A549 (cell line): ENCODE measurements at regions of chr2 and their contacts with region 1.

Region 1: DNA sequence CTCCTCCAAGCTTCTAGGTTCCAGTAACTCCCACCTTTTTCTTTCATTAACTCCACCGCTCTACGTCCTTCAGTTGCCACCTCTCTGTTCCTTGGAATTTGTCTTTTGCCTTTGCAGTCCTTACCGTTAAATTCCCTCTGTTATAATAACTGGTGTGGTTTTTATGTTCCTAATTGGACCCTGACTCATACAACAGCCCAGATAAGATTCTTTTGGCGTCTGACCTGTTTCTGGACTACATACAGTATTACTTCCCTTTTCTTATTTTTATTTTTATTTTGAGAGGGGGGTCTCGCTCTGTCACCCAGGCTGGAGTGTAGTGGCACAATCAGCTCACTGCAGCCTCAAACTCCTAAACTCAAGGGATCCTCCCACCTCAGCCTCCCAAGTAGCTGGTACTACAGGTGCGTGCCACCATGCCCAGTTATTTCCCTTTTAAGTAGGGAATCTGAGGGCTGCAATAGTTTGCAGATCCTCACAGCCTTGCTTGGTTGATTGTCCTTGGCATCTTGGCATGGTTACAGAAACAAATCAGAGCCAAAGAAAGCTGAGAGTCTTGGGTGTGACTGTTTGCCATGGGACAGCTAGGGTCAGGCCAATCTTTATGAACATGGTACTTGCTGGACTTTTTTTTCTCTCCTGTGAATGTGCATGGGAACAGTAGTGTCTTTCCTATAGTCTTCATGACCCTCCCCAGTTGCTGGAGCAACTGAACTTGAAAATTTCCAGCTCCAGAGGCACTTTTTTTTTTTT is 22.0 kb downstream of the TCF23 start:
- DNase-seq: no peak
- ATAC-seq: no peak
- H3K4me3 ChIP-seq: no peak overlapping the region
- H3K27ac ChIP-seq: no peak overlapping the region
- H3K4me1 ChIP-seq: no peaks in the 10 kb centered on the region
- CTCF ChIP-seq: no peak
- EP300 ChIP-seq: no peak
- POLR2A ChIP-seq: no peak
- RAD21 ChIP-seq: no peak

Region 2: DNA sequence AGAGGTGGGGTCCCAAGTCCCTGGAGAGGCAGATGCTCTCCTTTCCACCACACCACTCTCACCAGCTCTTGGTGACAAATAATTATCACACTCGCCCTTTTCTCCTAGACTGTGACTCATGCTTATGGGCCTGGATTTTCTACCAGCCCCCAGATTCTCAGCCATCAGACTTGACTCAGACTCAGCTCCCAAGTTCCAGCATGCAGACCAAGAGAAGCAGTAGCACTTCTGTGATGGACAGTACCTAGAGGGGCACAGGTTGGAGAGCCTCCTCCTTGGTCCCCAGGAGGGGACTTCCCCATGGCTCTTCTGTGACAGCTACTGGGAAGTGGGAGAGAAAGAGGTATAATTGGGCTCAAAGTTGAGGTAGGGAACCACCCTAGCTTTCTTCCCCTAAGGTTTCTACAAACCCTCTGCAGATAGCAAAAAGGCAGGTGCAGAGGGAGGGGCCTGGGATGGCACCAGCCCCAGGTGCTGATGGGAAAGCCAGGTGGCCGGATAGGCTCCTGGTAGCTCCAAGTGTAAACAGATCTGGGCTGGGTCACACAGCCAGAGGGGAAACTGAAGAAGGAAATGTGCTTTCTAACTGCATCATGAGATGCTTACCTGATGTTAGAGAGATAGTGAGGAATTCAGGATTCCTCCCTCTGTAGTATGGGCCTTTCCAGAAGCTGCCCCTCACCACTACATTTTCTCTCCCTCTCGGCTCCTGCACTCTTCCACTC is 17.8 kb before region 1 on chr2:
- CTCF ChIA-PET with region 1: interaction called, 36 read pairs
- POLR2A ChIA-PET with region 1: no interaction called
- DNase-seq: no peak
- ATAC-seq: peak in 1 of 2 experiments; percentile 13; a peak in 2 of 6 replicates
- H3K4me3 ChIP-seq: no peak overlapping the region
- H3K27ac ChIP-seq: no peak overlapping the region
- H3K4me1 ChIP-seq: 0 out of 3 replicates have a peak, but pooled peaks cover 8% of the 10 kb centered on the region
- CTCF ChIP-seq: no peak
- EP300 ChIP-seq: no peak
- POLR2A ChIP-seq: no peak
- RAD21 ChIP-seq: no peak

Region 3: DNA sequence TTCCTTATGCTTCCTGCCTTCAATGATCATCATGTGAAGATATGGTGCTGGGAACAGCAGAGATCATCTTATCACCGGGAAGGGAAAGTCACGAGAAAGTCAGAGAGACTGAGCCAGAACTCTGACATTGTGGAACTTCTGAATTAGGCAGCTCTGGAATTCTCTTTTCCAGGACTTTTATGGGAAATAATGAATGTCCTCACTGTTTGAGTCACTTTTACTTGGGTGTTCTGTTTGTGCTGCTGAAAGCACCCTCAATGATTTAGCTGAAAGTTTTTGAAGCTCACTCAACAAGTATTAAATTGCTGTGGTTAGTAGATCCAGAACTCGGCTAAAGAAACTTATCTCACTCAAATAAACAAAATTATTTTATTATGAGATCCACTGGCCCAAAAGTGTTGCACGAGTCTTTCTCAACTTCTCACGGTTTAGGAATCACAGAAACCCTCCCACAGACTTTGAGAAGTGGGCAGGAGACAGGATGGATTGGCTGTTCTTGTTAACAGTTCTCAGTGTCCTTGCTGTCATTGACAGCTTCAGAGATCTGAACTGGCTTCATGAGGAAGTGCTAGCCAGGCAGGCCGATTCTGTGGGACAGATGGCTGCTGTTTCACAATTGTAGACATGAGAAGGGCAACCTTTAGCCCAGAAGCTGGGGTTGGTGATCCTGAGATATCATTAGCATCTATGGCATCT is 14.7 kb after region 1 on chr2:
- CTCF ChIA-PET with region 1: interaction called, 34 read pairs
- POLR2A ChIA-PET with region 1: no interaction called
- DNase-seq: no peak
- ATAC-seq: peak in 1 of 2 experiments; percentile 51; a peak in 3 of 6 replicates
- H3K4me3 ChIP-seq: no peak overlapping the region
- H3K27ac ChIP-seq: no peak overlapping the region
- H3K4me1 ChIP-seq: no peaks in the 10 kb centered on the region
- CTCF ChIP-seq: no peak
- EP300 ChIP-seq: no peak
- POLR2A ChIP-seq: no peak
- RAD21 ChIP-seq: no peak

Region 4: DNA sequence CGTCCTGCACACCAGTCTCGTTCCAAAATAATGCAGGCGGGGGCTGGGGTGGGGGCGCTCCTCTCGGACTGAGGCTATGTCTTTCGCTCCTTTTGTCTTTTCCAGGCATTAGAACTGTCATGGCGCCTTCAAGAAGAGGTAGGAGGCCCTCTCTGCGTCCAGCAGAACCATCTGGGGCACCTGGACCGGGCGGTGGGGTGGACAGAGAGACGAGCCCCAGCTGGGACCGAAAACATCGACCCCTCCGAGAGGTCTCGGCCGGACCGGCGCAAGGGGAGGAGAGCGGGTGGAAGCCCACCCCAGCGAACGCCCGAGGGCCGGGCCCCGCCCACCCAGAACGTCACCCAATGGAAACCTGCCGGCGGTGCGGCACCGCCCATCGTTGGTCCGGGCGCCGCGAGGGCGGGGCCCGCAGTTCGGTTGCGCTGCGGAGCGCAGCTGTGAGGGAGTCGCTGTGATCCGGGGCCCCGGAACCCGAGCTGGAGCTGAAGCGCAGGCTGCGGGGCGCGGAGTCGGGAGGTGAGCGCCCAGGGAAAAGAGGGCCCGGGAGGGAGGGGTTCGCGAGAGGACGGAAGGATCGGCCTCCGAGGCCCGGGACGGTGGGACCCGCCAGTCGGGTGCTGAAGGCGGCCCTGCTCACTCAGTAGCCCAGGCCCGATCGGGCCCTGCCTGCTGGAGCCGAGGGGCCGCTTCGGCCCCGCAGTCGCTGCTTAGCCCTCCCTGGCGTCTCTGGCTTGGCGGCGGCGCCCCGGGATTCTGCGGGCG is 257.6 kb after region 1 on chr2 and contains the start of gene NRBP1:
- CTCF ChIA-PET with region 1: no interaction called
- POLR2A ChIA-PET with region 1: no interaction called
- DNase-seq: peak; percentile 88 to 93
- ATAC-seq: peak; percentile 90 to 94
- H3K4me3 ChIP-seq: peak within 1 kb of the TSS; percentile 89
- H3K27ac ChIP-seq: peak within 1 kb of the TSS; percentile 97 to 98
- H3K4me1 ChIP-seq: peaks cover 27% of the 10 kb centered on the region
- CTCF ChIP-seq: peak; percentile 35; the same call in 1 of the 3 replicates
- EP300 ChIP-seq: no peak
- POLR2A ChIP-seq: peak; percentile 93
- RAD21 ChIP-seq: no peak; a peak in 1 of 5 replicates
- polyA plus RNA-seq, gene NRBP1: 229 and 231 TPM in 2 replicates